ENCODE measurements at regions of chr16 and their contacts with region 1.

Region 1: DNA sequence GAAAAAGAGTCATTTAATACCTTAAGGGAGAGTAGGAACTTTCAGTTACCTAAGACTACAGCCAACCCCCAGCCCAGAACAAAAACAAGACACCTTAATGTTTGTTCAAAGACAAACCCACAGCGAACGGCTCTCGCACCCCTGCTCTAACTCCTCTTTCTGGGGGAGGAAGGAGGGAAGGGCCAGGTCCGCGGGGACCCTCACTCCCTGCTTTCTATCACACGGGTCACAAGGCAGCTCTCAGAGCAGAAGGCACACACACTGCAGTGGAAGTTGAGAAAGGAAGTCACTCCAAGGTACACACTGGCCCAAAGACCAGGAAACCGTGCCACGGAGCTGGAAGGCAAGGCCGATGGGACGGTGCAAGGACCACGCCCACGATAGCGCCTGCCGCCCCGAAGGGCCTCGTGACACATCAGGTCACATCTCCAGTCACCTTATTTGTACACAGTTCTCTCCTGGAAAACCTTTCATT is 10.0 kb downstream of the LITAFD start:
- DNase-seq: peak; percentile 42
- ATAC-seq: peak; percentile 59
- H3K4me3 ChIP-seq: peak overlapping the region; percentile 59
- H3K27ac ChIP-seq: peak overlapping the region; percentile 95
- H3K4me1 ChIP-seq: peaks cover 49% of the 10 kb centered on the region
- H3K27me3 ChIP-seq: no peaks in the 10 kb centered on the region
- CTCF ChIP-seq: no peak
- EP300 ChIP-seq: no peak
- POLR2A ChIP-seq: no peak; the same call in 1 of the 2 replicates
- RAD21 ChIP-seq: no peak

Region 2: GRCh38 chr16:8621572-8622314 is 270.4 kb before region 1 on chr16 and contains the start of gene METTL22:
- CTCF ChIA-PET with region 1: no interaction called
- POLR2A ChIA-PET with region 1: interaction called, 10 read pairs
- RAD21 ChIA-PET with region 1: no interaction called
- SMC1A ChIA-PET with region 1: interaction called, 3 read pairs
- in situ Hi-C with region 1: no loop called
- intact Hi-C with region 1: no loop called
- DNase-seq: peak; percentile 56
- ATAC-seq: peak; percentile 98
- H3K4me3 ChIP-seq: peak within 1 kb of the TSS; percentile 99
- H3K27ac ChIP-seq: peak within 1 kb of the TSS; percentile 64
- H3K4me1 ChIP-seq: no peaks in the 10 kb centered on the region
- H3K27me3 ChIP-seq: peaks cover 0 to 1% of the 10 kb centered on the region in 2 experiments; a peak in 1 of 4 replicates
- CTCF ChIP-seq: no peak
- EP300 ChIP-seq: no peak
- POLR2A ChIP-seq: peak; percentile 91
- RAD21 ChIP-seq: no peak
- polyA plus RNA-seq, gene METTL22: 6.4 to 9.2 TPM

Region 3: GRCh38 chr16:8868416-8869211 is 23.5 kb before region 1 on chr16 and contains the start of gene CARHSP1:
- CTCF ChIA-PET with region 1: interaction called, 10 read pairs
- POLR2A ChIA-PET with region 1: interaction called, 7 read pairs
- RAD21 ChIA-PET with region 1: interaction called, 26 read pairs
- SMC1A ChIA-PET with region 1: interaction called, 11 read pairs
- in situ Hi-C with region 1: no loop called
- intact Hi-C with region 1: loop called (anchors 1 kb)
- DNase-seq: peak; percentile 51
- ATAC-seq: peak; percentile 82
- H3K4me3 ChIP-seq: peak within 1 kb of the TSS; percentile 95
- H3K27ac ChIP-seq: peak within 1 kb of the TSS; percentile 90
- H3K4me1 ChIP-seq: peaks cover 32% of the 10 kb centered on the region
- H3K27me3 ChIP-seq: no peaks in the 10 kb centered on the region
- CTCF ChIP-seq: no peak
- EP300 ChIP-seq: no peak
- POLR2A ChIP-seq: peak; percentile 79
- RAD21 ChIP-seq: no peak
- polyA plus RNA-seq, gene CARHSP1: 5.5 to 8.4 TPM

Region 4: DNA sequence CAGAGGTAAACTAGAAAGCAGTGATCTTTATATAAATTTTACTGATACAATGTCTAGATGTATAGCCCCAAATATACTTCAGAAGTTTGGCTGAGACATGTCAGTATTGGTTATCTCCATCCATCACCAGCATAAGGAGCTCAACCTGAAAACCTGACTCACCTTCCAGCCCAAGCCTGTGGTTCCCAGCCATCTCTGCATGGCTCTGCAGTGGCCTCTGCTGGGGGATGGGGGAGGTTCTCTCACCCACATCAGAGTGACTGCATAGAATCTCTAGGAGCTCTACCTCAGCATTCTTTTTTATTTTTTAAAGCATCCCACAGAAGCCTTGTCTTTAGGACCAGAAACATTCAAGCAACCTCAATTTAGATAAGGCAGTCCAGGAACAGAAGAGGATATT is 44.3 kb after region 1 on chr16:
- CTCF ChIA-PET with region 1: interaction called, 31 read pairs
- POLR2A ChIA-PET with region 1: interaction called, 5 read pairs
- RAD21 ChIA-PET with region 1: interaction called, 23 read pairs
- SMC1A ChIA-PET with region 1: interaction called, 16 read pairs
- in situ Hi-C with region 1: no loop called
- intact Hi-C with region 1: no loop called
- DNase-seq: no peak
- ATAC-seq: peak; percentile 92
- H3K4me3 ChIP-seq: no peak overlapping the region
- H3K27ac ChIP-seq: no peak overlapping the region
- H3K4me1 ChIP-seq: peaks cover 50% of the 10 kb centered on the region
- H3K27me3 ChIP-seq: no peaks in the 10 kb centered on the region
- CTCF ChIP-seq: peak; percentile 70 to 84 (median 77)
- EP300 ChIP-seq: no peak
- POLR2A ChIP-seq: no peak
- RAD21 ChIP-seq: peak; percentile 85

Region 5: DNA sequence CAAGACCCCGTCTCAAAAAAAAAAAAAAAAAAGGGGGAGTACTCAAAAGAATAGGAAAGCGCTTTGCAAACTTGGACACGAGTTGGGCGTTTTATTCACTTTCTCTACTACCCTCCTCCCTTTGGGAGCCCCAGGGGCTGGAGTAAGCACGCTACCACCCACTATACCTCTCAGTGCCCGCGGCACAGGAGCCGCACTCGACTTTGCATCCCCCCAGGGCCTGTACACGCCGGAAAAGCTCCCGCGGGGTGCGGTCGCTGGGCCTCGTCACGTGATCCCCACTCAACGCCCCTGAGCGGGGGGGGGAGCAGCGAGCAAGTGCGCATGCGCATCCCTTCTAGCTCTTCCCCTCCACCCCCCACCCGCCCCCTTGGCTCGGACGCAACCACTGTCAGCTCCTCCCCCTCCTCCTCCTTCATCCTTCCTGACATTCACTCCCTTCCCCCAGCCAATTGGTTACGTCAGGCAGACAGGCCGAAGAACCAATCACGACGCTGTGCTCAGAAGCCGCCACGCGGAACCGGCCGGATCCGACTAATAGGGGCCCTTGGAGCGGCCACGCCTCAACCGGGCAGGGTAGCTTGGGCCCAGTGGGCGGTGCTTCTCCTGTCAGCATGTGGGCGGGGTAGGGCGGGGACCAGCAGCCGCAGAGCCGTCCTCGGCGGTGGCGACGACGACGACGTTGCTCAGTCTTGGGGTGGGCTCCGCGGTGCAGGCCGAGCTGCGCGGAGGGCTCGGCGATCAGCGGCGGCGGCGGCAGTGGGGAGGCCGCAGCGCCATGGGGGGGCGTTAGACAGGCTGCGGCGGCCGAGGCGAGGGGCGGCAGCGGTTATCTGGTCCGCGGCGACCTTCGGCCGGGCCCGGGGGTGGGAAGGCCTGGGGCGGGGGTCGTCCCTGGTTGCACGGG is 199.1 kb after region 1 on chr16 and contains the start of gene HAPSTR1:
- CTCF ChIA-PET with region 1: interaction called, 3 read pairs
- POLR2A ChIA-PET with region 1: interaction called, 5 read pairs
- RAD21 ChIA-PET with region 1: interaction called, 12 read pairs
- SMC1A ChIA-PET with region 1: no interaction called
- in situ Hi-C with region 1: no loop called
- intact Hi-C with region 1: loop called (anchors 1 kb)
- DNase-seq: peak; percentile 99
- ATAC-seq: peak; percentile 93
- H3K4me3 ChIP-seq: peak within 1 kb of the TSS; percentile 81
- H3K27ac ChIP-seq: peak within 1 kb of the TSS; percentile 90
- H3K4me1 ChIP-seq: peaks cover 6% of the 10 kb centered on the region
- H3K27me3 ChIP-seq: no peaks in the 10 kb centered on the region
- CTCF ChIP-seq: no peak
- EP300 ChIP-seq: no peak; a peak in 1 of 4 replicates
- POLR2A ChIP-seq: peak; percentile 98
- RAD21 ChIP-seq: no peak
- polyA plus RNA-seq, gene HAPSTR1: 8.7 to 12.5 TPM

Measured in GM12878 (cell line).